ENCODE measurements at regions of chr6 and their contacts with region 1.

Region 1: DNA sequence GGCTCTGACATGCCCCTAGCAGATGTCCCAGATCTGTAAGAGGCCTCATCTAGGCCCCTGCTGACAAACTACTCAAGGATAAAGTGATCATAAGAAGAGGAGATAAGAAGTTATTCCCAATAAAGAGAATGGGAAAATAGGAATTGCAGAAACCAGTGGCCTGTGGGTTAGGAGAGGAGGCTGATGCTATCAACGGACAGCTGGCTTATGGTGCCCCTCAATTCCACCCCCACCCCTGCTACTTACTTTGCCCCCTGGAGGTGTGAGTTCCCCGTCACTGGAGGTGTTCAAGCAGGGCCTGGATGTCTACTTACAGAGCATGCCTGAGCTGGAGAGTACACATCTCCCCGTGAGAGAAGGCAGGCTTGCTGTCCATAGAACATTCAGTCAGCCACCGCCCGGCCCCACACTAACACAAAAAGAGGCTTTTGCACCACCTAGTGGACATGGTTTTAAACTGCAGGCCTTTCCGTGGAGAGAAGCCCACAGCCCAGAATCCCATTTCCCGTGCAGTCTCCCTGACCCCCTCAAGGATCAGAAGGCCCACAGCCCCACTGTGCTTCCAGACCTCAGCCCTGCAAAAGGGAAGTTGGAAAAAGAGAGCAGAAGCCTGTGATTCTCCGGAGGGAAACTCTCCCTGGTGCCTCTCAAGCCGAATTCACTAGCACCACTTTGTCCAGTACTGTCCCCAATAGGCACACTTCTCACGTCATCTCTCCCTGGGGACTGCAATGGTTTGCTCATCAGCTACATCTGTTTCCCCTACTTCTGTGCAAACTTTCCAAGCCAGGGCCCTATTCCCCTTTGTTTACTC is 23.8 kb upstream of the BNIP5 start:
- DNase-seq: peak; percentile 65 to 80
- ATAC-seq: peak; percentile 87 to 97 (median 89)
- H3K4me3 ChIP-seq: no peak overlapping the region
- H3K27ac ChIP-seq: no peak overlapping the region
- H3K4me1 ChIP-seq: peaks cover 5% of the 10 kb centered on the region
- H3K27me3 ChIP-seq: no peaks in the 10 kb centered on the region
- CTCF ChIP-seq: peak; percentile 76

Region 2: GRCh38 chr6:36027501-36028087 is 332.9 kb before region 1 on chr6 and contains the start of gene MAPK14:
- intact Hi-C with region 1: loop called in 1 of 2 experiments (anchors 10 kb)
- DNase-seq: peak; percentile 99
- ATAC-seq: peak; percentile 95 to 96 (median 96)
- H3K4me3 ChIP-seq: peak within 1 kb of the TSS; percentile 90
- H3K27ac ChIP-seq: peak within 1 kb of the TSS; percentile 93
- H3K4me1 ChIP-seq: peaks cover 16% of the 10 kb centered on the region
- H3K27me3 ChIP-seq: no peaks in the 10 kb centered on the region
- CTCF ChIP-seq: peak; percentile 89
- total RNA-seq, gene MAPK14: 23.9 to 32.8 (median 31.4) TPM

Region 3: GRCh38 chr6:36123257-36124139 is 236.9 kb before region 1 on chr6:
- intact Hi-C with region 1: loop called (anchors 5 to 10 kb)
- DNase-seq: peak; percentile 82 to 91
- ATAC-seq: peak; percentile 80 to 91 (median 86)
- H3K4me3 ChIP-seq: no peak overlapping the region
- H3K27ac ChIP-seq: no peak overlapping the region
- H3K4me1 ChIP-seq: peaks cover 4% of the 10 kb centered on the region
- H3K27me3 ChIP-seq: no peaks in the 10 kb centered on the region
- CTCF ChIP-seq: peak; percentile 57

Region 4: GRCh38 chr6:36302227-36302976 is 58.0 kb before region 1 on chr6:
- intact Hi-C with region 1: loop called (anchors 1 to 5 kb)
- DNase-seq: peak; percentile 76 to 82
- ATAC-seq: peak; percentile 81 to 91 (median 86)
- H3K4me3 ChIP-seq: no peak overlapping the region
- H3K27ac ChIP-seq: no peak overlapping the region
- H3K4me1 ChIP-seq: no peaks in the 10 kb centered on the region
- H3K27me3 ChIP-seq: peaks cover 0 to 10% (median 0%) of the 10 kb centered on the region in 3 donors
- CTCF ChIP-seq: peak; percentile 91

Region 5: DNA sequence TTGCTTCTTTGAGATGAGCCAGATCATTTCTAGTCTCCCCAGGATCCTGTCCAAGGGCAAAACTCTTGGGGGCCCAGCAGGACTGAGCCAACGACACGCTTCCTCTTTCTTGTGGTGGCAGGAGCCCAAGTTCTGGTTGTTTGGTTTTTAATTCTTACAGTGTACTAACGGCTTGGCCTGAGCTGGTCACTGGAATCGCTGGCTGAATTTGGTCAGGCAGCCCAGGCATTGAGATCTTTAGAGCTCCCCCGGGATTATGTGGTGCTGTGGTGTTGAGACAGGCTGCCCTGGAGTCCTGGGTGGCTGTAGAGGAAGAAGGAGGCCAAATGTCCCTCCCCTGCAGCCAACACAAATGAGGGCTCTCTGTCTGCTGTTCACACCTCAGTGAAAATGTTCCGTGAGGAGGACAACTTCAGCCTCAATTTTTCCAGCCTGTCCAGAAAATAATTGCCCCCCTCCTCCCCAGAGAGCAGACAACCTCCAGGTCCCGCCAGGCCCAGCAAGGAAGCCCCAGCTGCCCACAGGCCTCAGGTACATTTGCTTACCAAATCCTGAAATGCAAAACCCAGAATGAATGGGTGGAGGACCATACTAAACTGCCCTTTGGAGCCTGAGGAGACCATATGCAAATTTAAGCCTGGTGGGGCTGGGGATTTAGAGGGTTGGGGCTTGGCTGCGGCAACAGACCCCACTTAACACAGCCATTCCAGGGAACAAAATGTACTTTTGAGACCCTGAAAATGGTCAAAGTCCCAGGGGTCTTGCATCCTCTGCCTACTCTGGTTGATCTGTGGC is 47.4 kb before region 1 on chr6:
- intact Hi-C with region 1: no loop called
- DNase-seq: no peak
- ATAC-seq: no peak
- H3K4me3 ChIP-seq: no peak overlapping the region
- H3K27ac ChIP-seq: no peak overlapping the region
- H3K4me1 ChIP-seq: no peaks in the 10 kb centered on the region
- H3K27me3 ChIP-seq: peaks cover 0 to 8% (median 0%) of the 10 kb centered on the region in 3 donors
- CTCF ChIP-seq: no peak

Region 6: DNA sequence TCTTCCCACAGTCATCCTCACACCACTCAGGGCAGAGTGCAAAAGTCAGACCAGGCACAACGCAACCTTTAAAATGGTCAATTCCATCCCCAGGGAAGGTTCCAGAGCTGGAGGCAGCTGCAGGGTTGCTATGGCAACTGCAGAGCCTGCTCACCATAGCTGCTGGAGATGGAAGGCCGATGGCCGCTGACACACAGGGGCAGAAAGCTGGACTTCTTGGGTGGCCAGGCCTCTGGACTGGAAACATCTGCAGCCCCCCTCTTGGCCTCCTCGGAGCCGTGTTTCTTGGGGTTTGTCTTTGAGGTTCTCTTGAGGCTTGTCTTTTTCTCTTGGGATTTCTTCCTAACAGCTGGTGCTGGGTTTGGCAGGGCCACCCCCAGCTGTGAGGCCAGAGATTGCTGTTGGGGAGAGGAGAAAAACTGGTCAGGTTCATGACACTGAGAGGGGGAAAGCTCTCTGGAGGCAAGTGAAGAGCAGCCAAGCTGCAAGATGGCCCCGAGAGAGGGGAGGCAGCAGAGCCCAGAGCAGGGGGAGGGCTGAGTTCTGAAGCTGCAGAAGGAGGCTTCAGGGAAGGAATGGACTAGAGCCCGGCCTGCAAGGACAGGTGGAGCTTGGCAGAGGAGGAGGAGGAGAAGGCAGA is 34.0 kb before region 1 on chr6:
- intact Hi-C with region 1: no loop called
- DNase-seq: peak in 1 of 2 donors; percentile 64
- ATAC-seq: peak in 1 of 4 donors; percentile 53
- H3K4me3 ChIP-seq: no peak overlapping the region
- H3K27ac ChIP-seq: no peak overlapping the region
- H3K4me1 ChIP-seq: no peaks in the 10 kb centered on the region
- H3K27me3 ChIP-seq: peaks cover 0 to 4% (median 0%) of the 10 kb centered on the region in 3 donors
- CTCF ChIP-seq: no peak

Region 7: DNA sequence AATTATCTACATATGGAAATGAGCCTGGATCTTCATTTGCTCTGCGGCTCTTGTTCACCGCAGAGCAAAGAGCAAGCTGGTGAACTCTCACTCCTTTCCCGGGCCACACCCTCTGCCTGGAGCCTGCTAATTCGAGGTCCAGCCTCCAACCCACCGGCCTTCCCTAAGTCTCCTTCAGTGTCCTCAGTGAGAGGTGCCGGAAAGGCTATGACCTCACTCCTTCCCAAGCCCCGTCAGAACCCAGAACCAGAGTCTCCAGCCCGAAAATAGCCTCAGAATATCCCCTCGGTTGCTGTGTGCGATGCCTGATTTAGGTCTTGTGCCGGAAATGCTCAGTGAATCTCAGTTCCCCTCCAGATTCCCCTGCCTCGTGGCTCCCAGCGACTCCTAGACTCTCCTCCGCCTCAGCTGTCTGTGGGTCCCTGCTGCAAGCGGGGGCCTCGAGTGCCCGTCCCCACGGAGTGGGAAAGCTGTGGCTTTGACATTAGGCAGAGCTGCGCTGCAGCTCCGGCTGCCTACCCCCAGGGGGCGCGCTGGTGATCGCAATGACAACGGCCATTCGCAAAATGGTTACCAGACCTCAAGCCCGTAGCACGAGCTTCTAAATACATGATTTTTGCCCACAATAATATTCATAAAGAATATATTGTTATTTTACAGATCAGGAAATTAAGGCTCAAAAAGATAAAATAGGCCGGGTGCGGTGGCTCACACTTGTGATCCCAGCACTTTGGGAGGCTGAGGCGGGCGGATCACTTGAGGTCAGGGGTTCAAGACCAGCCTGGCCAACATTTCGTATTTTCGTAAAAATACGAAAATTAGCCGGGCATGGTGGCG is 19.6 kb before region 1 on chr6:
- intact Hi-C with region 1: loop called in 1 of 2 experiments (anchors 1 kb)
- DNase-seq: peak; percentile 80 to 88
- ATAC-seq: peak; percentile 75 to 93 (median 84)
- H3K4me3 ChIP-seq: peak overlapping the region; percentile 22
- H3K27ac ChIP-seq: no peak overlapping the region
- H3K4me1 ChIP-seq: peaks cover 3% of the 10 kb centered on the region
- H3K27me3 ChIP-seq: peaks cover 0 to 35% (median 3%) of the 10 kb centered on the region in 3 donors
- CTCF ChIP-seq: peak; percentile 94